PC-3 (cell line): ENCODE measurements at regions of chr7 and their contacts with region 1.

Region 1: DNA sequence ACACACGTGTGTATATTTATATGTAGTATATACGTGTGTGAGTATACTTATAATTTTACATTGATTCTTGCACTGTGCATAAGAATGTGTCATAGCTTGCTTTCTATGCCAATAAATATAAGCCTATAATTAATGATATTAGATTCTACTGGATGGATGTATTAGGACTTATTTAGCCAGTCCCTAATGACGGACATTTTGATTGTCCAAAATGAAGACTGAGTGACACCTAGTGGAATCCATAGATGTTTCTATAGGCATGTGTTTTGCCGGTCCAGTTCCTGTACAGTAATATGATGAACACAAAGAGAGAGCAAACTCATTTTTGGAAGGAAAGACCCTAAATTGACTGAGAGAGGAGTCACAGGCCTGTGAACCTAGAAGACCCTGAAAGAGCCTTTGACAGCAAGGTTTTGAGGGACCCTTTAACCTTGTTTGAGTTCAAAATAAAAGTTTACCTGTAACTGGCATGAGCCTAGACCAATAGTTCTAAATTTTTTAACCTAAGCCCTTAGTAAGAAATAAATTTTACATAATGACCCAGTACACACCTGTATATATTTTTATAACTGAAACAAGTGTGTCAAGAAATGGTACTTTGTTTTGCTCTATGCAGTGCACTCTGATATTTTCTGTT is 42.4 kb upstream of the AGBL3 start:
- DNase-seq: peak; percentile 74
- ATAC-seq: peak; percentile 96
- H3K4me3 ChIP-seq: no peak overlapping the region
- H3K27ac ChIP-seq: no peak overlapping the region
- H3K4me1 ChIP-seq: no peaks in the 10 kb centered on the region
- H3K27me3 ChIP-seq: no peaks in the 10 kb centered on the region
- CTCF ChIP-seq: peak; percentile 78

Region 2: DNA sequence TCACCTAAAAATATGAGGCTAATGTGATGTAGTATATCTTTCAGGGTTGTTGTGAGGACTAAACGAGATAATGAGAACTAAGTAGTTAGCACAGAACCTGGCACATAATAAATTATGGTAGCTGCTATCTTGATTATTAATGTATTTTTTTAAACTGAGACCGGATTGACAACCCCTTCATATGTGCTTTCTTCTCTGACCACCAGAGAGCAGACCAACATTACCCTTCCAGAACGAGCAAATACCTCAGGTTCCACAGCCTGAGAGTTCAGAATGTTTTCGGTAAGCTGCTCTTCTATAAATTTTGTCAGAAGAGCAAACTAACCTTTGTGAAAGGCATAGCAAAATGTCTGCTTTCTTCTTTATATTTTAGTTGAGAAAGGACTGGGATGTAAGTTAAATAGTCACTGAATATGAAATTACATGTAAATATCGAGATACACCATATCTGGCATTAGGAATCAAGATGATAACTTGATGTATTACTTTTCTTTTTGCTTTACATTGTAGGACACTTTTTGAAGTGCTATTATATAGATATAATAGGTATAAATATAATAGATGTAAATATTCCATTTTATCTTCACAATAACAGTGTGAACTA is 310.8 kb before region 1 on chr7:
- CTCF ChIA-PET with region 1: no interaction called
- POLR2A ChIA-PET with region 1: no interaction called
- intact Hi-C with region 1: loop called (anchors 2 kb)
- DNase-seq: peak; percentile 64
- ATAC-seq: peak; percentile 69
- H3K4me3 ChIP-seq: no peak overlapping the region
- H3K27ac ChIP-seq: no peak overlapping the region
- H3K4me1 ChIP-seq: no peaks in the 10 kb centered on the region
- H3K27me3 ChIP-seq: no peaks in the 10 kb centered on the region
- CTCF ChIP-seq: peak; percentile 84

Region 3: DNA sequence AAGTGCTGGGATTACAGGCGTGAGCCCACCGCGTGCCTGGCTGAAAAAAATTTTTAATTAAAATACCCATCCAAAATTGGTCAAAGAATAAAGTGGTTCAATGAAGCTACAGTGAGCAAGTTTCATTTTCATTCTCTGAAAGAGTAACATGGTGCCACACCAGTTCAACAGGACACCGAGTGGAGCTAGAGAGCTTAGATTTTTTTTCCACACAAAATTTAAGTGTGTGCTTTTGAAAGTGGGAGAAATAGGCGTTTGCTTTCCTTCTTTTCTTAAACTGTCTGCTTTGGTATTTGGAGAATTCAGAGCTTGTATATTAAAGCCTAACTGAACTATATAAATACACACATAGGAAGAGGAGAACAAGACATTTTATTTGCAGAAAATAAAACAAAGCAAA is 253.9 kb before region 1 on chr7:
- CTCF ChIA-PET with region 1: interaction called, 3 read pairs
- POLR2A ChIA-PET with region 1: no interaction called
- intact Hi-C with region 1: loop called (anchors 1 kb)
- DNase-seq: peak; percentile 15
- ATAC-seq: peak; percentile 51; the same call in 1 of the 2 replicates
- H3K4me3 ChIP-seq: no peak overlapping the region
- H3K27ac ChIP-seq: no peak overlapping the region
- H3K4me1 ChIP-seq: 0 out of 2 replicates have a peak, but pooled peaks cover 11% of the 10 kb centered on the region
- H3K27me3 ChIP-seq: no peaks in the 10 kb centered on the region
- CTCF ChIP-seq: peak; percentile 42; the same call in 1 of the 2 replicates

Region 4: GRCh38 chr7:134724606-134725005 is 219.3 kb before region 1 on chr7:
- CTCF ChIA-PET with region 1: no interaction called
- POLR2A ChIA-PET with region 1: no interaction called
- intact Hi-C with region 1: loop called (anchors 1 kb)
- DNase-seq: peak; percentile 53
- ATAC-seq: peak; percentile 88
- H3K4me3 ChIP-seq: no peak overlapping the region
- H3K27ac ChIP-seq: no peak overlapping the region
- H3K4me1 ChIP-seq: no peaks in the 10 kb centered on the region
- H3K27me3 ChIP-seq: no peaks in the 10 kb centered on the region
- CTCF ChIP-seq: peak; percentile 75

Region 5: GRCh38 chr7:134878731-134879295 is 65.1 kb before region 1 on chr7:
- CTCF ChIA-PET with region 1: interaction called, 3 read pairs
- POLR2A ChIA-PET with region 1: no interaction called
- intact Hi-C with region 1: loop called (anchors 1 kb)
- DNase-seq: no peak
- ATAC-seq: no peak; the same call in 1 of the 2 replicates
- H3K4me3 ChIP-seq: no peak overlapping the region
- H3K27ac ChIP-seq: no peak overlapping the region
- H3K4me1 ChIP-seq: no peaks in the 10 kb centered on the region
- H3K27me3 ChIP-seq: no peaks in the 10 kb centered on the region
- CTCF ChIP-seq: peak; percentile 20; the same call in 1 of the 2 replicates

Region 6: DNA sequence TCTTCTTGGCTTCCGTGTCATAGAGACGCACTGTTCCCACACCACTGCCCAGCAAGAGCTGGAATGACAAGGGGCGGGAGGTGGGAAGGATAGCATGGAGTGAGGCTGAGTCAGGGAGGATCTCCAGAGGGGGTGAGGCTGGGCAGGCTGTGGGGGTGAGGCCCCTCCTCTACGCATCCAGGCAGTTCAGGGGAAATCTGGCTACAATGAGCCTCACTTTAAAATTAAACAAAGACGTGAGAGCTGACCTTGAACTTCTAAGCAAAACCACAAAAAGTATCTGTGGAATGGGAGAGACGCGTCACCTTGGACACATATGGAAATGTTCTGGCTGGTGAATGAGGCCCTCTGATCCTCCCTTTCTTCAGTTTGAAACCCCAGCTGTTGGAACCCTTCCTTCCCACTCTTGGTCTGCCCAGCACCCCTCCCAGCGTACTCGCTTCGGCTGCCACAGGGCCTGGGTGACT is 249.8 kb after region 1 on chr7:
- CTCF ChIA-PET with region 1: no interaction called
- POLR2A ChIA-PET with region 1: no interaction called
- intact Hi-C with region 1: no loop called
- DNase-seq: no peak
- ATAC-seq: no peak
- H3K4me3 ChIP-seq: no peak overlapping the region
- H3K27ac ChIP-seq: no peak overlapping the region
- H3K4me1 ChIP-seq: no peaks in the 10 kb centered on the region
- H3K27me3 ChIP-seq: no peaks in the 10 kb centered on the region
- CTCF ChIP-seq: no peak

Region 7: DNA sequence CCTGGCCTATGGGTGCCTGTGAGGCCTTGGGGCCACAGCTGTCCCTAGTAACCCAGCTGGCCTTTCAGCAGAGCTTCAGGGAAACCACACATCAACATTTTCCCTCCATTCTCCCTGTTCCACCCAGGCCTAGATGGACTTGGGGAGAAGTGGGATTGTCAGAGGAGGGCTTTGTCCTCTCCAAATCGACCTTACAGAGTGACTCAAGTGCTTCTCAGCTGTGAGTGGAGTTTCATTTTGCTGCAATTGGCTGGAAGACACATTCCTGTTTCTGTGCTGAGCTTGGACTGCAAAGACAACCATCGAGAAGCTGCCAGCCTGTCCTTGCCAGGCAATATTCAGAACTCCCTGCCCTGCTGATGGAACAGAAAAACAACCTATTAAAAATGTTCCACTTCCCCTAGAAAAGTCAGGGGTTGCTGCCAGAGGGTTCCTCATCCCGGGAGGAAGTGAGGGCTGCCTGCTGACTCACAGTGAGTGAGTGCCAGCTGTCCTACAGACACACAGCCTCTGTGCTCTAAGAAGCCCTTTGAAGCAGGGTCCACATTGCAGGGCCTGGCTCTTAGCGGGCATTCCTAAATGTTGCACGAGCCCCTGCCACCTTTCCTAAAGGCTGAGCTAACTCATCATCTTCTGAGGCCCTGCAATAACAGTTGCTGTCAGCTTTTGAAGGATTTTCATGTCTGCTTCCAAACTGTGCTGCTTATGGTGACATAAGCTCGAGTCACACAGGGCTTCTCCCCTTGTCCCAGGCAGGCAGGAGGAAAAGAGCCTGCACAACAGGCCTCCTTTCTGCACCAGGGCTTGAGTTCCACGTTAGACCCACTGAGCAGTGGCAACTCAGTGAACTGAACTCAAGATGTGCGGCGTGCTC is 310.3 kb after region 1 on chr7:
- CTCF ChIA-PET with region 1: no interaction called
- POLR2A ChIA-PET with region 1: no interaction called
- intact Hi-C with region 1: no loop called
- DNase-seq: peak; percentile 74
- ATAC-seq: peak; percentile 98
- H3K4me3 ChIP-seq: no peak overlapping the region
- H3K27ac ChIP-seq: peak overlapping the region; percentile 47
- H3K4me1 ChIP-seq: peaks cover 22% of the 10 kb centered on the region
- H3K27me3 ChIP-seq: no peaks in the 10 kb centered on the region
- CTCF ChIP-seq: no peak